ENCODE measurements at regions of chr17 and their contacts with region 1.

Region 1: GRCh38 chr17:3738562-3739295 is 15.0 kb downstream of the HASPIN start:
- DNase-seq: peak in 8 of 9 donors; percentile 56 to 69 (median 60)
- ATAC-seq: peak; percentile 79
- H3K4me3 ChIP-seq: no peak overlapping the region
- H3K4me3 Mint-ChIP-seq: peak overlapping the region; percentile 2 to 77 (median 68)
- H3K27ac ChIP-seq: no peak overlapping the region
- H3K27ac Mint-ChIP-seq: peak overlapping the region; percentile 61 to 95 (median 73)
- H3K4me1 ChIP-seq: peaks cover 11 to 20% of the 10 kb centered on the region in 2 donors
- H3K4me1 Mint-ChIP-seq: peaks cover 21 to 47% (median 38%) of the 10 kb centered on the region in 7 donors
- H3K27me3 ChIP-seq: no peaks in the 10 kb centered on the region
- H3K27me3 Mint-ChIP-seq: no peaks in the 10 kb centered on the region

Region 2: DNA sequence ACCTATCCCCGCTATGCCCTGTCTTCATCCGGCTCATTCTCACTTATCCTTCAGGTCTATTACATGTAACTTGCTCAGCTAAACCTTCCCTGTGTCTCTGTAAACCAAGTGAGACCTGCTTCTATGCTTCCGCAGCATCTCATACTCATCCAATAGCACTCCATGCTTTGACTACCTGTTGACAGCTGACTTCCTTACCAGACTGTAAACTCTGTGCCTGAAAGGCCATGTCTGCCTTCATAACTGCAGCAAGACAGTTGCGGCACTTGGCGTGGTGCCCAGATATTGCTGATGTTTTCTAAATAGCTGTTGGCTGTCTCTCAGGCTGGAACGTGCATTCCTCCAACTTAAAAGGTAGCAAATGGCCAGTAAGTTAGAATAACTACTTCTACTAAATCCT is 338.7 kb before region 1 on chr17:
- CTCF ChIA-PET with region 1: no interaction called
- POLR2A ChIA-PET with region 1: no interaction called
- intact Hi-C with region 1: no loop called
- DNase-seq: no peak
- ATAC-seq: no peak
- H3K4me3 ChIP-seq: no peak overlapping the region
- H3K4me3 Mint-ChIP-seq: no peak overlapping the region
- H3K27ac ChIP-seq: no peak overlapping the region
- H3K27ac Mint-ChIP-seq: no peak overlapping the region
- H3K4me1 ChIP-seq: no peaks in the 10 kb centered on the region
- H3K4me1 Mint-ChIP-seq: peaks cover 0 to 1% (median 0%) of the 10 kb centered on the region in 7 donors
- H3K27me3 ChIP-seq: no peaks in the 10 kb centered on the region
- H3K27me3 Mint-ChIP-seq: peaks cover 0 to 35% (median 28%) of the 10 kb centered on the region in 5 donors

Region 3: GRCh38 chr17:3683054-3683511 is 55.6 kb before region 1 on chr17:
- CTCF ChIA-PET with region 1: interaction called, 4 read pairs
- POLR2A ChIA-PET with region 1: interaction called, 3 read pairs
- intact Hi-C with region 1: loop called in 1 of 2 experiments (anchors 2 kb)
- DNase-seq: peak in 7 of 9 donors; percentile 39 to 67 (median 52)
- ATAC-seq: peak; percentile 96
- H3K4me3 ChIP-seq: no peak overlapping the region
- H3K4me3 Mint-ChIP-seq: no peak overlapping the region
- H3K27ac ChIP-seq: no peak overlapping the region
- H3K27ac Mint-ChIP-seq: peak overlapping the region in 2 of 9 donors; percentile 9 to 65
- H3K4me1 ChIP-seq: peaks cover 4 to 7% of the 10 kb centered on the region in 2 donors
- H3K4me1 Mint-ChIP-seq: peaks cover 0 to 25% (median 6%) of the 10 kb centered on the region in 7 donors
- H3K27me3 ChIP-seq: no peaks in the 10 kb centered on the region
- H3K27me3 Mint-ChIP-seq: no peaks in the 10 kb centered on the region

Region 4: GRCh38 chr17:3762922-3763776 is 24.4 kb after region 1 on chr17:
- CTCF ChIA-PET with region 1: interaction called, 6 read pairs
- POLR2A ChIA-PET with region 1: no interaction called
- intact Hi-C with region 1: loop called in 1 of 2 experiments (anchors 1 kb)
- DNase-seq: no peak
- ATAC-seq: peak; percentile 64
- H3K4me3 ChIP-seq: peak overlapping the region; percentile 24
- H3K4me3 Mint-ChIP-seq: peak overlapping the region in 3 of 10 donors; percentile 22 to 82 (median 53)
- H3K27ac ChIP-seq: no peak overlapping the region
- H3K27ac Mint-ChIP-seq: peak overlapping the region in 5 of 9 donors; percentile 48 to 95 (median 67)
- H3K4me1 ChIP-seq: peaks cover 14 to 45% of the 10 kb centered on the region in 2 donors
- H3K4me1 Mint-ChIP-seq: peaks cover 17 to 51% (median 32%) of the 10 kb centered on the region in 7 donors
- H3K27me3 ChIP-seq: no peaks in the 10 kb centered on the region
- H3K27me3 Mint-ChIP-seq: no peaks in the 10 kb centered on the region

Region 5: DNA sequence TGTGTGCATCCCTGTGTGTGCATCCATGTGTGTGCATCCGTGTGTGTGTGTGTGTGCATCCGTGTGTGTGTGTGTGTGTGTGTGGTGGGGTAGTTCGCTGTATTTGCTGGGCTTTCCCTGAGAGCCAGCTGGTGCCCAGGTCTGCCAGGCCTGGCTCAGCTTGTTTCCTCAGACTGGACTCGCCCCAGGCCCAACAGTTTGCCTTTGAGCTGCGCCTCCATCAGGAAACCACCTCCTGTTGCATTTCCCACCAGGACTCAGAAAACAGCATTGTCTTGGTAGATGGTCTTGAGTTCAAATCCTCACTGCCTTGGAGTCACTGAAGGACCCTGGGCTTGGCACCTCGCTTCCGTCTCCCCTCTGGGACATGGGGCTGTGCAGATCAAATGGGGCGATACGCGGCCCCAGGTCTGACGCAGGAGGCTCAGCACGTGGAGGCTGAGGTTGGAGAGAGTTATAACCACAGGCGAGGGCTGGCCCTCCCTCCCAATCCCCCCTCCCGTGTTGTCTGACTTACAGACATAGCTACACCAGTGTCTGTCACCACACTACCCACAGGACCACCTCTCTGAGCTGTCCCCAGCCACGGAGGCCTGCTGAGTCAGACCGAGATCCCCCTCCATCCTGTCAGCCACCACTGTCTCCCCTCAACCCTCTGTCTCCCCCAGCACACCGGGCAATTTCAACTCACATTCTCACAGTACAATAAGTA is 57.5 kb after region 1 on chr17:
- CTCF ChIA-PET with region 1: interaction called, 11 read pairs
- POLR2A ChIA-PET with region 1: no interaction called
- intact Hi-C with region 1: no loop called
- DNase-seq: peak in 1 of 9 donors; percentile 41
- ATAC-seq: peak; percentile 79
- H3K4me3 ChIP-seq: no peak overlapping the region
- H3K4me3 Mint-ChIP-seq: peak overlapping the region in 1 of 10 donors; percentile 46
- H3K27ac ChIP-seq: no peak overlapping the region
- H3K27ac Mint-ChIP-seq: peak overlapping the region in 3 of 9 donors; percentile 23 to 49 (median 24)
- H3K4me1 ChIP-seq: peaks cover 0 to 29% of the 10 kb centered on the region in 2 donors
- H3K4me1 Mint-ChIP-seq: peaks cover 0 to 30% (median 7%) of the 10 kb centered on the region in 7 donors
- H3K27me3 ChIP-seq: no peaks in the 10 kb centered on the region
- H3K27me3 Mint-ChIP-seq: no peaks in the 10 kb centered on the region

Region 6: GRCh38 chr17:3893003-3893719 is 154.4 kb after region 1 on chr17 and contains the start of gene CAMKK1:
- CTCF ChIA-PET with region 1: no interaction called
- POLR2A ChIA-PET with region 1: no interaction called
- intact Hi-C with region 1: loop called in 1 of 2 experiments (anchors 1 kb)
- DNase-seq: peak; percentile 71 to 96 (median 85)
- ATAC-seq: peak; percentile 87
- H3K4me3 ChIP-seq: peak within 1 kb of the TSS; percentile 70
- H3K4me3 Mint-ChIP-seq: peak within 1 kb of the TSS; percentile 81 to 90 (median 86)
- H3K27ac ChIP-seq: peak within 1 kb of the TSS; percentile 77
- H3K27ac Mint-ChIP-seq: peak within 1 kb of the TSS; percentile 73 to 93 (median 88)
- H3K4me1 ChIP-seq: peaks cover 11 to 23% of the 10 kb centered on the region in 2 donors
- H3K4me1 Mint-ChIP-seq: peaks cover 23 to 45% (median 35%) of the 10 kb centered on the region in 7 donors
- H3K27me3 ChIP-seq: no peaks in the 10 kb centered on the region
- H3K27me3 Mint-ChIP-seq: peaks cover 0 to 7% (median 0%) of the 10 kb centered on the region in 5 donors
- total RNA-seq, gene CAMKK1: 4.8 to 12.5 (median 6.3) TPM

Region 7: DNA sequence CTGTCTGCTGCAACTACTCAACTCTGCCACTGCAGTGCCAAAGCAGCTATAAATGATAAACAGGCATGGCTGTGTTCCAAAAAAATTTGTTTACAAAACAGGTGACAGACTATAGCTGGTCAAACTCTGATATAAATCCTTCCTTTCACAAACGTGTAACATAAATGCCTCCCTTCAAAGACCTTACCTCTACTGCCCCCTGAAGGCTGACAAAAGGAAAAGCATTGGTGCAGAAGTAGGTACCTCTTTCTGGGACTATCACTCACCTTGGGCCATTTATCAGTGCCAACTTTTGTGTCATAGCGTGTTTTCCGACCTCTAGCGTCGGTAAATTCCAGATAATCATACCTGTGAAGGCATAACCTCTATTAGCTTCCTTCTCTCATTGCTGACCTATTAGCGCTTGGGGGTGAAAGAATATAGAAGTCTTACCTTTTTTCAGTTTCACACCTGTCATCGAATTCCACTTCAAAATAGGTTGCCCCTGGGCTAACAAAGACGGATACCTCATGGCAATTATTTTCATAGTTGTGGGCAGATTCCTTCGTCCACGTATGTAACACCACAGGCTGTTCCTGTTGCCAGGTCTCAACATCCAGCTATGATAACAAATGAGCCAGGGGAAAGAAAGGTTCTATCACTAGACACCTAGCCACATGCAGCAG is 336.2 kb after region 1 on chr17:
- CTCF ChIA-PET with region 1: interaction called, 4 read pairs
- POLR2A ChIA-PET with region 1: no interaction called
- intact Hi-C with region 1: loop called in 1 of 2 experiments (anchors 2 kb)
- DNase-seq: peak in 7 of 9 donors; percentile 9 to 56 (median 42)
- ATAC-seq: peak; percentile 75
- H3K4me3 ChIP-seq: no peak overlapping the region
- H3K4me3 Mint-ChIP-seq: no peak overlapping the region
- H3K27ac ChIP-seq: no peak overlapping the region
- H3K27ac Mint-ChIP-seq: peak overlapping the region in 2 of 9 donors; percentile 39 to 41
- H3K4me1 ChIP-seq: no peaks in the 10 kb centered on the region
- H3K4me1 Mint-ChIP-seq: no peaks in the 10 kb centered on the region
- H3K27me3 ChIP-seq: no peaks in the 10 kb centered on the region
- H3K27me3 Mint-ChIP-seq: no peaks in the 10 kb centered on the region

Measured in naive thymus-derived CD4-positive, alpha-beta T cell (primary cell).